Esophagus muscularis mucosa (tissue), 4 donors: ENCODE measurements at regions of chr22 and their contacts with region 1.

Region 1: GRCh38 chr22:35350539-35351503 is 30.1 kb upstream of the HMOX1 start:
- DNase-seq: peak; percentile 98
- H3K4me3 ChIP-seq: peak overlapping the region; percentile 60 to 67 (median 62)
- H3K27ac ChIP-seq: peak overlapping the region; percentile 84 to 88 (median 87)
- H3K4me1 ChIP-seq: peaks cover 17 to 40% (median 34%) of the 10 kb centered on the region in 4 donors
- H3K27me3 ChIP-seq: no peaks in the 10 kb centered on the region
- CTCF ChIP-seq: peak; percentile 89 to 95 (median 93)
- EP300 ChIP-seq: no peak
- POLR2A ChIP-seq: no peak

Region 2: DNA sequence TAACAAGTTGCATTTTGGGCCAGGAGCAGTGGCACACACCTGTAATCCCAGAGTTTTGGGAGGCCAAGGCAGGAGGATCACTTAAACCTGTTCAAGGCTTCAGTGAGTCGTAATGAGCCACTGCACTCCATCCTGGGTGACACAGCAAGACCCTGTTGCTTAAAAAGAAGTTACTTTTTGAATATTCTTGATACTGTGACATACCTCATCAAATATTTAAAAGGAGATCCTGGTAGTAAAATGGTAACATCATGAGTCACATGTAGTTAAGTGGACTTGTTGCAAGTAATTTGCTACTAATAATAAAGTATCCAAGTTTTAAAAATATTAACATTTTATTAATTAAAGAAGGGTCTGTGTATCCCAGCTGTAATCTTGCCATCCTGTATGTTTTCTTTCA is 75.2 kb before region 1 on chr22:
- intact Hi-C with region 1: no loop called
- DNase-seq: no peak
- H3K4me3 ChIP-seq: no peak overlapping the region
- H3K27ac ChIP-seq: no peak overlapping the region
- H3K4me1 ChIP-seq: no peaks in the 10 kb centered on the region
- H3K27me3 ChIP-seq: no peaks in the 10 kb centered on the region
- CTCF ChIP-seq: no peak
- EP300 ChIP-seq: no peak
- POLR2A ChIP-seq: no peak

Region 3: GRCh38 chr22:35409783-35410662 is 59.2 kb after region 1 on chr22:
- intact Hi-C with region 1: loop called (anchors 10 kb)
- DNase-seq: no peak
- H3K4me3 ChIP-seq: no peak overlapping the region
- H3K27ac ChIP-seq: peak overlapping the region in 1 of 4 donors; percentile 13
- H3K4me1 ChIP-seq: no peaks in the 10 kb centered on the region
- H3K27me3 ChIP-seq: no peaks in the 10 kb centered on the region
- CTCF ChIP-seq: no peak
- EP300 ChIP-seq: no peak
- POLR2A ChIP-seq: no peak

Region 4: GRCh38 chr22:35430897-35431322 is 80.1 kb after region 1 on chr22:
- intact Hi-C with region 1: loop called (anchors 2 kb)
- DNase-seq: peak; percentile 96
- H3K4me3 ChIP-seq: no peak overlapping the region
- H3K27ac ChIP-seq: peak overlapping the region; percentile 64 to 72 (median 69)
- H3K4me1 ChIP-seq: peaks cover 8 to 18% (median 15%) of the 10 kb centered on the region in 4 donors
- H3K27me3 ChIP-seq: no peaks in the 10 kb centered on the region
- CTCF ChIP-seq: peak; percentile 98 to 99 (median 99)
- EP300 ChIP-seq: no peak
- POLR2A ChIP-seq: no peak

Region 5: GRCh38 chr22:35582861-35583670 is 232.2 kb after region 1 on chr22:
- intact Hi-C with region 1: loop called (anchors 2 kb)
- DNase-seq: no peak
- H3K4me3 ChIP-seq: no peak overlapping the region
- H3K27ac ChIP-seq: peak overlapping the region in 3 of 4 donors; percentile 33 to 75 (median 62)
- H3K4me1 ChIP-seq: peaks cover 14 to 29% (median 28%) of the 10 kb centered on the region in 4 donors
- H3K27me3 ChIP-seq: no peaks in the 10 kb centered on the region
- CTCF ChIP-seq: peak; percentile 93 to 96 (median 95)
- EP300 ChIP-seq: no peak
- POLR2A ChIP-seq: no peak

Region 6: DNA sequence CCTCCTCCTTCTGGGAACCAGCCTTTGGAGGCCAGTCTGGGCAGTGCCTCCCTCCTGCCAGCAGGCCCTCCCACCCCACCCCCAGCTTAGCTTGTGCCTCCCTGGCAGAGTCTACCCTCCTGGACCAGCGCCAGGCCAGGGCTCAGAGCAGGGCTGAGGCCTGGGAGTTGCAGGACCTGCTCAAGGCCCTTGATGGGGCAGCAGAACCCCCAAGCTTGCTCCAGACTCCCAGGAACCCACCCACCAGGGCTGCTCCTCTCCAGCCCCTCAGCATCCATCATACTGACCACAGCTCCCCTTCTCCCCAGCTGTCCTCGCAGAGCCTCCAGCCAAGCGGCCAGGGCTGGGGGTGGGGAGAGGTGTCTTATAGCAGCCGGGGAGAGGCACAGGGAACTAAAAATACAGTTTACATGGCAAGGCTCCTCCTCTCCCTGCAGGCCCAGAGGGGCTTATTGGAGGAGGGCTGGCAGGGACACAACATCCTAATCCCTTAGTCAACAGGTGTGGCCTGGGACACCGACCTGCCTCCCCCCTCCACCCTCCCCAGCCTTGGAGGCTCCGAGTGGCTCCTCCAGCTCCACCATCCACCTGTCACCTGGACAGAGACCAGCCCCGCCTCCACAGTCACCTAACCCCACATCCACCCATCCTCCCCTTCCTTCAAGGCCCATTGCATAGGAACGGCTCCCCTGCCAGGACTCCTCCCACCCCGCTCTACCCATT is 271.5 kb after region 1 on chr22:
- intact Hi-C with region 1: loop called (anchors 5 kb)
- DNase-seq: no peak
- H3K4me3 ChIP-seq: no peak overlapping the region
- H3K27ac ChIP-seq: peak overlapping the region; percentile 76 to 87 (median 80)
- H3K4me1 ChIP-seq: peaks cover 45 to 63% (median 47%) of the 10 kb centered on the region in 4 donors
- H3K27me3 ChIP-seq: no peaks in the 10 kb centered on the region
- CTCF ChIP-seq: no peak
- EP300 ChIP-seq: no peak
- POLR2A ChIP-seq: no peak